ENCODE measurements at regions of chr5 and their contacts with region 1.

Region 1: GRCh38 chr5:132064738-132065331 is 4.4 kb downstream of the IL3 start:
- DNase-seq: peak; percentile 88
- H3K4me3 Mint-ChIP-seq: no peak overlapping the region
- H3K27ac Mint-ChIP-seq: no peak overlapping the region
- H3K4me1 Mint-ChIP-seq: peaks cover 5% of the 10 kb centered on the region
- H3K27me3 Mint-ChIP-seq: no peaks in the 10 kb centered on the region
- CTCF ChIP-seq: peak; percentile 97

Region 2: GRCh38 chr5:131589510-131590348 is 475.1 kb before region 1 on chr5:
- CTCF ChIA-PET with region 1: interaction called, 24 read pairs
- POLR2A ChIA-PET with region 1: interaction called, 3 read pairs
- intact Hi-C with region 1: loop called (anchors 1 kb)
- DNase-seq: peak; percentile 58
- H3K4me3 Mint-ChIP-seq: no peak overlapping the region
- H3K27ac Mint-ChIP-seq: no peak overlapping the region
- H3K4me1 Mint-ChIP-seq: peaks cover 8% of the 10 kb centered on the region
- H3K27me3 Mint-ChIP-seq: no peaks in the 10 kb centered on the region
- CTCF ChIP-seq: peak; percentile 98

Region 3: DNA sequence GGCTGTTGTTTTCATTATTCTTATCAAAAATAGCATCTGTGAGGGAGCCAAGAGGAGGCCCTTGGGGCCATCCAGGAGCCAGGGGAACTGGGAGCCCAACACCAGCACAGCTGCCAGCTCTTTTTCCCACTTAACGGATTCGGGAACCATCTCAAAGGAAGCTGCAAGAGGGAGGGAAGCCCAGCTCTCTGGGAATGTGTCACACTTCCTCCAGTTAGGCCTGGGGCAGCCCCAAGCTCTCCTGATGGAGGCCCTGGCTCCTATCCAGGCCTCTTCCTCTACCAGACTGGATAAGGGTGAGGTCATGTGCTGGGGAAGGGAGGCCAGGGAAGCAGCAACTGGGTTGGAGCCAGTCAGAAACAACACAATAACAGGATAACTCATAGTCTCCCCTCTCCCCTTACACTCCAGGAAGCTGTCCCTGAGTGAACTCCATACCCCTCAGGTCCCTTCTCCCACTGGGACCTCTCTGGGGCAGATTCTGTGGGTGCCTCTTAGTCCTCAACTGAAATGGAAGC is 21.5 kb after region 1 on chr5:
- CTCF ChIA-PET with region 1: interaction called, 32 read pairs
- POLR2A ChIA-PET with region 1: no interaction called
- intact Hi-C with region 1: no loop called
- DNase-seq: peak; percentile 99
- H3K4me3 Mint-ChIP-seq: no peak overlapping the region
- H3K27ac Mint-ChIP-seq: peak overlapping the region; percentile 20
- H3K4me1 Mint-ChIP-seq: peaks cover 50% of the 10 kb centered on the region
- H3K27me3 Mint-ChIP-seq: no peaks in the 10 kb centered on the region
- CTCF ChIP-seq: no peak

Region 4: GRCh38 chr5:132180134-132180745 is 115.4 kb after region 1 on chr5:
- CTCF ChIA-PET with region 1: interaction called, 74 read pairs
- POLR2A ChIA-PET with region 1: no interaction called
- intact Hi-C with region 1: loop called (anchors 1 kb)
- DNase-seq: peak; percentile 82
- H3K4me3 Mint-ChIP-seq: no peak overlapping the region
- H3K27ac Mint-ChIP-seq: no peak overlapping the region
- H3K4me1 Mint-ChIP-seq: peaks cover 16% of the 10 kb centered on the region
- H3K27me3 Mint-ChIP-seq: no peaks in the 10 kb centered on the region
- CTCF ChIP-seq: peak; percentile 89

Region 5: GRCh38 chr5:132238169-132238744 is 173.4 kb after region 1 on chr5:
- CTCF ChIA-PET with region 1: interaction called, 16 read pairs
- POLR2A ChIA-PET with region 1: no interaction called
- intact Hi-C with region 1: loop called (anchors 2 kb)
- DNase-seq: peak; percentile 80
- H3K4me3 Mint-ChIP-seq: no peak overlapping the region
- H3K27ac Mint-ChIP-seq: no peak overlapping the region
- H3K4me1 Mint-ChIP-seq: peaks cover under 1% of the 10 kb centered on the region
- H3K27me3 Mint-ChIP-seq: no peaks in the 10 kb centered on the region
- CTCF ChIP-seq: peak; percentile 96

Region 6: DNA sequence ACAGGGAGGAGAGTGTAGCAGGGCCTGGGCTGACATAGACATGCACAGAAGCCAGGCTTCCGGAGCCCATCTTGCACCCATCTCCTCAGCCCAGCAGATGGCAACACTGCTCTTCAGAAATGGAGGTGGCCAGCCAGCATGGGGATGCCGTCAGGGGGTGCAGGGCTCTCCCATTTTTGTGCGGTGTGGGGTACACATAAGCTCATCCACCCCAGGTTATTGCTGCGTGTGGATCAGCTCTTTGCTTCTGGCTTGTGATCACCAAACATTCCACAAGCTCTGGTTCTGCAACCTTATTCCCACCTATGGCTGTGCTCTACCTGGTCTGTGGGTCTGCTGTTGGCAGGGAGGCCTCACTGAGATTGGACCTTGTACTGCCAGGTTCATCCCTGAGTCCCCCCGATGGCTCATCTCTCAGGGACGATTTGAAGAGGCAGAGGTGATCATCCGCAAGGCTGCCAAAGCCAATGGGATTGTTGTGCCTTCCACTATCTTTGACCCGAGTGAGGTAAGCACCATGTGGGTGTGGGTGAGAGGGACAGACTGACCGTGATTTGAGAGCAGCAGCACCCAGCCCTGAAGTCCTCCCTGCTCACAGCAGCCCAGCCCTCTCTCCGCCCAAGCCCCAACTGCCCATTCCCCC is 321.9 kb after region 1 on chr5:
- CTCF ChIA-PET with region 1: interaction called, 5 read pairs
- POLR2A ChIA-PET with region 1: no interaction called
- intact Hi-C with region 1: loop called (anchors 5 kb)
- DNase-seq: peak; percentile 87
- H3K4me3 Mint-ChIP-seq: no peak overlapping the region
- H3K27ac Mint-ChIP-seq: peak overlapping the region; percentile 13
- H3K4me1 Mint-ChIP-seq: peaks cover 53% of the 10 kb centered on the region
- H3K27me3 Mint-ChIP-seq: no peaks in the 10 kb centered on the region
- CTCF ChIP-seq: peak; percentile 89